Posterior vena cava (tissue), 2 donors: ENCODE measurements at regions of chr2 and their contacts with region 1.

Region 1: GRCh38 chr2:101205521-101205998 is 47.1 kb upstream of the CNOT11 start:
- DNase-seq: no peak

Region 2: GRCh38 chr2:101012706-101013181 is 192.8 kb before region 1 on chr2:
- intact Hi-C with region 1: loop called in 1 of 2 experiments (anchors 5 kb)
- DNase-seq: no peak

Region 3: DNA sequence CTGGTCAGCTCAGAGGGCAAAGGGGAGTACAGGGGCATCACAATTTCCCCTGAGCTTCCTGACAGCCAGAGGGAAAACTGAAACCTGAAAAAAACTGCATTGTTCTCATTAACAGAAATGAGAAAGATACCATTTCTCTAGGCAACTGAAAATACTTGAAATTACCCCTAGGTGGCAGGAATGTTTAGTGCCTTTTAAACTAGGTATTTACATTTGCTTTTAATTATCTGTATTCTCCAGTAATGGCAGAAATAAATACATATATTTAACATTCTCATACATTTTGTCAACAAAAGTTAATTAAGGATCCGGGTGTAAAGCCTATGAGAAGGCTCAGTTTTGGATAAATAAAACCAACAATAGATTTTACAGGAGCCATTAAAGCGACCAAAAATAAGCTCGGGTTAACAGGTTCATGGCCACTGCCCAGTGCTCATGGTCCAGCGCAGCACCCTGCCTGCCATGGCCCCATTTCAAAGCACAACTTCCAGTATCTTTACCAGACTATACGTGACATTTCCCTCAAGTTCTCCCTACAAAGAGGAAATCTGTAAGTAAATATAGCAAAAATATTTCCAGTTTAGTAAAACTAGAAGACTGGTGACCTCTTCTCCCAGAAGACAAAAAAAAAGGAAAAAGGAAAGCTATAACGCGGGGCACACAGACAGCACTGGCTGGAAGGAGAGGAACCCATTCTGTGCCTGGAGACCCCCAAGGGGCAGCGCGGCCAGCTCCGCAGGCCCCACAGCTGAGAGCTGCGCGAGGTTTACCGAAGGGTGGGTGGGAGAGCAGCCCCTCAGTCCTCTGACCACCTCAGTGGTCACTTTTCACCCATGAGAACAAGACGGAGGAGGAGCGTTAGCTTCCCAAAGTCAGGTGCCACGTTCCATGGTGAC is 168.8 kb before region 1 on chr2:
- intact Hi-C with region 1: loop called in 1 of 2 experiments (anchors 10 kb)
- DNase-seq: no peak